ENCODE measurements at regions of chr10 and their contacts with region 1.

Region 1: DNA sequence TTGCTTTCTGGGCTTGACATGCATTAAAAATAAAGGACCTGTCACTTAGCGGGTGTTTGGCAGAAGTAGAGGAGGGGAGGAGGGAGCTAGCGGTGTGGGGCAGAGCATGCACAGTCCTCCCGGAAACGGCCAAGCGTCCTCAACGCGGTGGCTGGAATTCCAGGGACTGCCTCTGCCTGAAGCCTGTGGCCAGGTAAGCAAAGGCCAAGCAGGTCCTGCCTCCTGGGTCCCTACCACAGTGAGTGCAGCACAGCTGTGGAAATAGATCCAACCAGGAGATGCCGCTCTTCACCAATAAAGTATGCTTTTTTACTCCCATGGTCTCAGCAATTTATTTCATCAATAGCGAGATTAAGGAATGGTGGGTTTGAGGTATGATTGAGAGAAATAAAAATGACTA is 323.4 kb downstream of the WDR37 start:
- DNase-seq: no peak

Region 2: GRCh38 chr10:1357746-1358145 is 21.9 kb before region 1 on chr10:
- CTCF ChIA-PET with region 1: no interaction called
- POLR2A ChIA-PET with region 1: no interaction called
- DNase-seq: no peak

Region 3: GRCh38 chr10:1368842-1369171 is 10.8 kb before region 1 on chr10:
- CTCF ChIA-PET with region 1: interaction called, 11 read pairs
- POLR2A ChIA-PET with region 1: no interaction called
- DNase-seq: peak; percentile 73

Measured in HEK293T (cell line).